Activated naive CD4-positive, alpha-beta T cell treated with anti-CD3 and anti-CD28 coated beads for 36 hours (primary cell): ENCODE measurements at regions of chr11 and their contacts with region 1.

Region 1: DNA sequence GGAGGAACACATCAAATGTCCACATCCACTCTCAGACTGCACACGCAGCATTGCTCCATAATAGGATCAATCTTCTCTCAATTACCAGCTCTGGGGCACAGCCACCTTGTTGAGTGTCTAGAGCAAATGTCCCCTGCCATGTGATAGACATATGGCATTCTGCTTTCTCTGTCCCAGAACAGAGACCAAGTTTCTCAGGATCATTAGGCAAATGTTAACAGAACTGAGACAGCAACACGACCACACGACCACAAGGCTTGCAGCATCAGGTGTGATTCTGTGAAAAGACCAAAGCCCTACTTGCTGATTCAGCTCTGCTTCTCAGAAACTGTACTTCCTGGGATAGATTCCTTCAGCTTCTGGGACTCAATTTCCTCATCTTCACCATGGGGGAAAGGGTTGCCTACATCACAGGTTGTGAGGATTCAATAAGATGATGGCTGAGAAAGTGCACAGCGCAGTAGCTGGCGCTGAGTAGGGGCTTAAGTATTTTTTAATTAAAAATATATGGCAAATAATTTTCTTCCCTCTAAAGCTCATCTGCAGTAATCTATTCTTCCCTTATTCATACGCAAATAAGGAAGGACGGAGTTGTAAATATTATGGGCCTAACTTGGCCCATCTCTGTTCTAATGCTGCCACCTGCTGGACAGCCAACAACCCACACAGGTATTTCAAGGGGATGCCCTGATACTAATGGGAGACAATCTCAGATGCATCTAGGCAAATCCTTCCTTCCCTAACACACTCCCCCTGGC is 54.3 kb upstream of the USP47 start:
- DNase-seq: peak; percentile 83
- H3K4me3 Mint-ChIP-seq: no peak overlapping the region
- H3K27ac Mint-ChIP-seq: no peak overlapping the region
- H3K4me1 Mint-ChIP-seq: no peaks in the 10 kb centered on the region
- H3K27me3 Mint-ChIP-seq: peaks cover 3% of the 10 kb centered on the region

Region 2: DNA sequence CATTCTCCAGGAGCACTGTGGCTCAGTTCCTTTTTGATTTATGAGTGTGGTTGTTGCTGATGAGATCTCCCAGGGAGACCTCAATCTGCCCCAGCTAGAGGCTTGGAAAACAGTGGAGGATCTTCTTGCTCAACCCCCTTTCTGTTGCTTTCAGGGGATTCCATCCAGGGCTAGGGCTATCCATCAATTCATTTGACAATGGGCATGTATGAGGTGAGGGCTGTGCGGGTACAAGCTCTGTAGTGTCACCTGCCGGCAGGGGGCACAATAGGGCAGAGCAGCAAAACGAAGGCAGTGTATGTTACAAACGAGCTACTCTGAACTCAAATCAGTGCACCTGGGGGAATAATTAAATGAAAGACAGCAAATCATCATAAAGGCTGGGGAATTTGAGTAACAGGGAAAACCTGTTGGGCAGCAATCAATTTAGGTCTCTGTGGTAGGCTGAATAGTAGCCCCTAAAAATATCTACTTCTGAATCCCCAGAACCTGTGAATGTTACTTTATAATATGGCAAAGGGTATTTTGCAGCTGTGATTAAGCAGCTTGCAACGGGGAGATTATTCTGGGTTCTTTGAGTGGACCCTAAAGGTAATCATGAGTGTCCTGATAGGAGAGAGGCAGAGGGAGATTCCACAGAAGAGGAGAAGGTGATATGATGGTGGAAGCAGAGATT is 759.3 kb before region 1 on chr11:
- CTCF ChIA-PET with region 1: interaction called, 28 read pairs
- intact Hi-C with region 1: loop called (anchors 1 kb)
- DNase-seq: peak; percentile 88
- H3K4me3 Mint-ChIP-seq: no peak overlapping the region
- H3K27ac Mint-ChIP-seq: no peak overlapping the region
- H3K4me1 Mint-ChIP-seq: no peaks in the 10 kb centered on the region
- H3K27me3 Mint-ChIP-seq: no peaks in the 10 kb centered on the region

Region 3: GRCh38 chr11:11230802-11231562 is 556.5 kb before region 1 on chr11:
- CTCF ChIA-PET with region 1: interaction called, 4 read pairs
- intact Hi-C with region 1: loop called (anchors 1 kb)
- DNase-seq: peak; percentile 46
- H3K4me3 Mint-ChIP-seq: no peak overlapping the region
- H3K27ac Mint-ChIP-seq: no peak overlapping the region
- H3K4me1 Mint-ChIP-seq: no peaks in the 10 kb centered on the region
- H3K27me3 Mint-ChIP-seq: peaks cover 4% of the 10 kb centered on the region

Region 4: GRCh38 chr11:11400635-11401232 is 386.8 kb before region 1 on chr11:
- CTCF ChIA-PET with region 1: interaction called, 4 read pairs
- intact Hi-C with region 1: loop called (anchors 2 kb)
- DNase-seq: peak; percentile 10
- H3K4me3 Mint-ChIP-seq: no peak overlapping the region
- H3K27ac Mint-ChIP-seq: no peak overlapping the region
- H3K4me1 Mint-ChIP-seq: no peaks in the 10 kb centered on the region
- H3K27me3 Mint-ChIP-seq: peaks cover 4% of the 10 kb centered on the region

Region 5: GRCh38 chr11:11607772-11608171 is 179.7 kb before region 1 on chr11:
- CTCF ChIA-PET with region 1: no interaction called
- intact Hi-C with region 1: no loop called
- DNase-seq: no peak
- H3K4me3 Mint-ChIP-seq: no peak overlapping the region
- H3K27ac Mint-ChIP-seq: no peak overlapping the region
- H3K4me1 Mint-ChIP-seq: no peaks in the 10 kb centered on the region
- H3K27me3 Mint-ChIP-seq: peaks cover 9% of the 10 kb centered on the region

Region 6: DNA sequence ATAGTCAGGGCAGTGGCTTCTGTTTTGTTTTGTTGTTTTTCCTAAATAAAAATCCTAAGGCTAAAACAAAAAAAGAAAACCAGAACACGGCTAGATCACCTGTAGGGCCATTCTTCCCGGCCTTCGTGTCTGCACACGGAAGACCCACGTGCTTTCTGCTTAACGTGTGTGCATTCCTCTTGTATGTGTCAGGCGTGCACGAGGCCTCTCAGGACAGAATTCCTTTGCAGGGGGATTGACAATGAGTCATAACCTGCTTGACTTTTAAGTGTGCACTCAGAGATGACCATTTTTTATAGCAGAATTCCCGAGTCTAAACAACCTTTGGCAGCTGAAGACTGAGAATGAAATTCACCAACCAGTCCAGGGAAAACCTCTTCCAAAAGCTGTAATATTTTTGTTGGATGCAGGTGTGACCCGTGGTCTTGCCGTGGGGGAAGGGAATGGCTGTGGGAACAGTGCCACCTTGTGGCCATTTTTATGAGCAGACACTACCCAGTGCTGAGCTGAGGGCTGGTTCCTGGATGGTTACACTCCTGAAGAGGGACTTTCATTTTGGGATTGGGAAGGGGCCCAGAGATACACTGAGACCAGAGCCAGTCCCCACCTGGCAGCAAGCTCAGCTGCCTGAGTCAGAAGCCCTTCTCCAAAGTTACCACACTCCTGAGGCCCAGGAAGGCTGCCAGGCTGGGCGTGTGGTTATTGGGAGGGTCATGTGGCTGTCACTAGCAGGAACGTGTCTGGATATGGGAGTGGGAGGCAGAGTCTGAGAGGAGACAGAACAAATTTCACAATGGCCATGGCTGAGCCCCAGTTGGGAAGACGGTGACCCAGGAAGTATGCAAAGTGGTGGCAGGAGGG is 256.7 kb after region 1 on chr11:
- CTCF ChIA-PET with region 1: interaction called, 5 read pairs
- intact Hi-C with region 1: loop called (anchors 1 kb)
- DNase-seq: peak; percentile 79
- H3K4me3 Mint-ChIP-seq: no peak overlapping the region
- H3K27ac Mint-ChIP-seq: no peak overlapping the region
- H3K4me1 Mint-ChIP-seq: peaks cover 3% of the 10 kb centered on the region
- H3K27me3 Mint-ChIP-seq: peaks cover 8% of the 10 kb centered on the region